ENCODE measurements at regions of chr2 and their contacts with region 1.

Region 1: GRCh38 chr2:74334931-74335333 is 8.3 kb downstream of the SLC4A5 start:
- DNase-seq: peak; percentile 72
- H3K27ac ChIP-seq: no peak overlapping the region
- CTCF ChIP-seq: peak; percentile 94

Region 2: GRCh38 chr2:73823916-73824523 is 510.9 kb before region 1 on chr2:
- CTCF ChIA-PET with region 1: interaction called, 11 read pairs
- POLR2A ChIA-PET with region 1: no interaction called
- DNase-seq: peak; percentile 55
- H3K27ac ChIP-seq: no peak overlapping the region
- CTCF ChIP-seq: peak; percentile 85

Region 3: DNA sequence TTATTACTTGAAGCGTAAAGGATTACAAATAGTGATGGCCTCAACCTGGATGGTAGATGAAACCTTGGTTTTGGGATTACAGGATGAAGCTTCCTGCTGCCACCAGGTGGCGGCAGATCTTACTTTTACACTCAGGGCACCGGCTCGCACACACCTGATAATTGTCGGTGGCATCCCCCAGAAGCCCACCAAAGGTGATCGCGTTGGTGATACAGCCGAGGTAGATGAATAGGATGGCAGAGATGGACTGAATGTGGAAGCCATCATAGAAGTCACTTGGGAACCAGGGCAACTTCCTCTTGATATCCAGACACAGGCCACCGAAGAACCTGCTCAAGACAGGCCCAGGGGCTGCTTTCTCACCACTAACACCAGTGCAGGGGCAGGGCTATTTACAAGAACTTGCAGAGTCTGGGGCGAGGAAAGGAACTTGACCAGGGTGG is 84.7 kb before region 1 on chr2:
- CTCF ChIA-PET with region 1: interaction called, 14 read pairs
- POLR2A ChIA-PET with region 1: no interaction called
- DNase-seq: peak; percentile 60
- H3K27ac ChIP-seq: no peak overlapping the region
- CTCF ChIP-seq: peak; percentile 78

Region 4: DNA sequence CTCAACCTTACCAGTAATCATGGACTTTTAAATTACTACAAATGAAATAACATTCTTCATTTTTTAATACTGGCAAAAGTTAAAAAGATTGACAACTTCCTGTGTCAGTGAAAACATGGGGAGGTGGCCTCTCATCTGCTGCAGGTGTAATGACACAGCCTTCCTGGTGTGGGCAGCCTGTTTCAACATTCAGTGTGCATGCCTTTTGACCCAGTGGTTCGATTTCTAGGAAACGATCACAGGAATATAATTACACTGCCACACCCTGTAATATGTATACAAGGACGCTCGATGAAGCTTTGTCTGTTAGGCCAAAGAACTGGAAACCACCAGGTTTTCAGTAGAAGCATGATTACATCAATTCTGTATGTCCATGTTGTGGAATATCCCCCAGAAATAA is 67.9 kb before region 1 on chr2:
- CTCF ChIA-PET with region 1: interaction called, 10 read pairs
- POLR2A ChIA-PET with region 1: no interaction called
- DNase-seq: peak; percentile 59
- H3K27ac ChIP-seq: no peak overlapping the region
- CTCF ChIP-seq: 0 out of 2 replicates have a peak, but pooled peaks have one; percentile 20

Region 5: GRCh38 chr2:74374509-74375205 is 39.7 kb after region 1 on chr2:
- CTCF ChIA-PET with region 1: no interaction called
- POLR2A ChIA-PET with region 1: no interaction called
- DNase-seq: peak; percentile 20
- H3K27ac ChIP-seq: no peak overlapping the region
- CTCF ChIP-seq: no peak

Measured in RWPE1 (cell line).